ENCODE measurements at regions of chr17 and their contacts with region 1.

Region 1: GRCh38 chr17:42997984-42998938 is at the start of gene RPL27:
- DNase-seq: peak; percentile 98
- ATAC-seq: peak; percentile 98
- H3K4me3 Mint-ChIP-seq: peak within 1 kb of the TSS; percentile 95
- H3K27ac Mint-ChIP-seq: peak within 1 kb of the TSS; percentile 99
- H3K4me1 Mint-ChIP-seq: peaks cover 31% of the 10 kb centered on the region
- H3K27me3 Mint-ChIP-seq: no peaks in the 10 kb centered on the region
- total RNA-seq, gene RPL27: 1,703 to 2,161 TPM

Region 2: GRCh38 chr17:42577532-42578281 is 420.6 kb before region 1 on chr17 and contains the start of gene PSMC3IP:
- CTCF ChIA-PET with region 1: interaction called, 7 read pairs
- POLR2A ChIA-PET with region 1: interaction called, 5 read pairs
- intact Hi-C with region 1: loop called in 1 of 2 experiments (anchors 1 kb)
- DNase-seq: peak; percentile 98
- ATAC-seq: peak; percentile 92
- H3K4me3 Mint-ChIP-seq: peak within 1 kb of the TSS; percentile 88
- H3K27ac Mint-ChIP-seq: peak within 1 kb of the TSS; percentile 98
- H3K4me1 Mint-ChIP-seq: peaks cover 28% of the 10 kb centered on the region
- H3K27me3 Mint-ChIP-seq: no peaks in the 10 kb centered on the region
- total RNA-seq, gene PSMC3IP: 27.0 to 28.9 TPM

Region 3: DNA sequence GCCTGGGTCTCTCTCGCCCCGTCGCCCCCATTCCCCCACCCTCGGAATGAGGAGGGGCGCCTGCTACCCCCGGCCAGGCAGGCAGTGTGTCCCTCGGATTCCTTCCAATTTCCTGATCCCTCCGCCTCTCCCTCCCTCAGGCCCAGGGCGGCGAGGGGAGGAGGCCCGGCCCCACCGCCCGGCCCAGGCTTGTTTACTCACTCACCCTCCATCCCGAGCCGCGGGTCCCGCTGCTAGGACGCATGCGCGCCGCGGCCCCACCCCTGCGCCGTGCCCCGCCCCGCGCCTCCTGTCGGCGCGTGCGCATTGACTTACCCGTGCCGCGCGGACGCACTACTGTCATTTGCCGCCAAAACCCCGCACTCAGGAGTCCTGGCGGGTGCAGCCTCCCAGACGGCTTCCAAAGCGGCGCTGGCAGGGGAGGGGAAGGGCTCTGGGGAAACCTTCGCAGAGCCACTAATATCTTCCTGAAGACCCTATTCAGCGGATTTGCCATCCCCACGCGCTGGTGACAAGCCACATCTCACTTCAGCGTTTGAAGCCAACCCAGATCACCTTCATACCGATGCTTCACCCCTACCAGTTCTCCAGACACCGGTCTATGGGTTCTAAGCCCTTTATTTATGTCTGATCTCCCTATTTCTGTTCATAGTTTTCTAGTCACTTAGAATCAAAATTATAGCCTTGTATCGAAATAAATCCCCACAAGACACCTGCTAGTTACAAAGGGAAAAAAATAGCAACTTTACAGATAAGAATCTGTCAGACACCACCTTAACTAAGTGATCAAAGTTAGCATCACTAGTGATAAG is 253.2 kb before region 1 on chr17 and contains the start of gene EZH1:
- CTCF ChIA-PET with region 1: no interaction called
- POLR2A ChIA-PET with region 1: no interaction called
- intact Hi-C with region 1: loop called in 1 of 2 experiments (anchors 1 kb)
- DNase-seq: peak; percentile 96
- ATAC-seq: peak; percentile 91
- H3K4me3 Mint-ChIP-seq: peak within 1 kb of the TSS; percentile 89
- H3K27ac Mint-ChIP-seq: peak within 1 kb of the TSS; percentile 98
- H3K4me1 Mint-ChIP-seq: peaks cover 19% of the 10 kb centered on the region
- H3K27me3 Mint-ChIP-seq: peaks cover 7% of the 10 kb centered on the region
- total RNA-seq, gene EZH1: 28.6 to 29.5 TPM

Region 4: DNA sequence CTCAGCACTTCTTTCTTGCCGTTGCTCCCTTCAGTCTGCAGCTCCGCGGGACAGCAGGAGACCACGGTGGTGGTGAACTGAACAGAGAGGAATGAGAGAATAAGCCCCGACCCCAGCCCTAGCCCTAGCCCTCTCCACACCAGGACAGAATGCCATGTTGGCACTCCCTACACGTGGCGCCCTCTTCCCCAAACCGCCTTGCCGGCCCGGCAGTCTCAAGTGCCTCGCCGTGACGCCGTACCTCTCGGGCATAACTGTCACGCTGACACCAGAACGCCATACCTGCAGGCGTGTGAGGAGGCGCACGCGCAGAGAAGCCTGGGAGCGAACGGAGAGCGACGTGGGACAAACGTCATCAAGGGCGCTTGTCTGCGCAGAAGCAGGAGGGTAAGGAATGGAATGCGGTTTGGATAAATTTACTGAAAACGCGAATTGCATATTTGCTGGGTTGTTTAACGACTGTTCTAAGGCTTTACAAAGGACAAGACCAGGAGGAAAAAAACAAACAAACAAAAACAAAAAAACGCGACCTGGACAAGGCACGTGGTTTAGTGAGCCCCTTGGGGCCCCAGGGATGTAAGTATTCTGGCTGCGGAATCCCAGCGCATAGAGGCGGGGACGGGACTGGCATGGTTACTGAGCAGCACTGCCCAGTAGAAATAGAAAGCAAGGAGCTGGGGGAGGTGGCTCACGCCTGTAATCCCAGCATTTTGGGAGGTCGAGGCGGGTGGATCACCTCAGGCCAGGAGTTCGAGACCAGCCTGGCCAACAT is 33.9 kb before region 1 on chr17 and contains the start of gene AARSD1:
- CTCF ChIA-PET with region 1: interaction called, 9 read pairs
- POLR2A ChIA-PET with region 1: interaction called, 5 read pairs
- intact Hi-C with region 1: loop called (anchors 1 kb)
- DNase-seq: peak; percentile 95
- ATAC-seq: peak; percentile 95
- H3K4me3 Mint-ChIP-seq: peak within 1 kb of the TSS; percentile 93
- H3K27ac Mint-ChIP-seq: peak within 1 kb of the TSS; percentile 90
- H3K4me1 Mint-ChIP-seq: peaks cover 22% of the 10 kb centered on the region
- H3K27me3 Mint-ChIP-seq: no peaks in the 10 kb centered on the region
- total RNA-seq, gene AARSD1: 40.8 to 58.6 TPM

Region 5: GRCh38 chr17:43125133-43125966 is 127.1 kb after region 1 on chr17 and contains the start of gene BRCA1:
- CTCF ChIA-PET with region 1: interaction called, 9 read pairs
- POLR2A ChIA-PET with region 1: interaction called, 5 read pairs
- intact Hi-C with region 1: loop called (anchors 1 kb)
- DNase-seq: peak; percentile 97
- ATAC-seq: peak; percentile 99
- H3K4me3 Mint-ChIP-seq: peak within 1 kb of the TSS; percentile 99
- H3K27ac Mint-ChIP-seq: peak within 1 kb of the TSS; percentile 99
- H3K4me1 Mint-ChIP-seq: peaks cover 19% of the 10 kb centered on the region
- H3K27me3 Mint-ChIP-seq: no peaks in the 10 kb centered on the region
- total RNA-seq, gene BRCA1: 99.9 to 115 TPM

Region 6: DNA sequence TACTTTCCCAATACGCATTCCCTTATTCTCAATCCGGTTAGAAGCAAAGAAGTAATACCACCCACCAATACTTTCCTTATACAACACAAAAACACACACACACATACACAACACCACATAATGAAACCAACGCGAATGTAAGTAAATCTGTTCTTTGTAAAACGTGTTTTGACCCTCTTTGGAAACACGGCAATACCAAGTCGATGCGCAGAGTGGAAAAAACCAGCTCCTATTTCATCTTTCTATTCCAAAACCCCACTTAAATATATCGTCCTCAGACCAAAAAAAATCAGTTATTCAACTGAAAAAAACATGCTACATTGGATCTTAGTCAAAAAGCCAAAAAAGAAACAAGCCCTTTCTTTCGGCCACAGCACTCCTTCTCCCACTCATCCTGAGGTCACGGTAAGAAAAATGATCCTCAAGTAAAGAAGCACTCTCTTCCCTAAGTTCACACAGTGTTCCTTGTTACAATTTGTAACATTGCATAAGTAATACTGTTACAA is 369.5 kb after region 1 on chr17:
- CTCF ChIA-PET with region 1: no interaction called
- POLR2A ChIA-PET with region 1: interaction called, 19 read pairs
- intact Hi-C with region 1: no loop called
- DNase-seq: peak; percentile 62
- ATAC-seq: peak; percentile 53
- H3K4me3 Mint-ChIP-seq: peak overlapping the region; percentile 85
- H3K27ac Mint-ChIP-seq: peak overlapping the region; percentile 100
- H3K4me1 Mint-ChIP-seq: peaks cover 57% of the 10 kb centered on the region
- H3K27me3 Mint-ChIP-seq: no peaks in the 10 kb centered on the region

Measured in activated CD4-positive, alpha-beta T cell treated with anti-CD3 and anti-CD28 coated beads for 36 hours (primary cell).